HCT116 (cell line): ENCODE measurements at regions of chr14 and their contacts with region 1.

Region 1: GRCh38 chr14:87542288-87542687 is 450.7 kb downstream of the GALC start:
- DNase-seq: no peak
- ATAC-seq: no peak
- H3K4me3 ChIP-seq: no peak overlapping the region
- H3K27ac ChIP-seq: no peak overlapping the region
- H3K4me1 ChIP-seq: no peaks in the 10 kb centered on the region
- H3K27me3 ChIP-seq: no peaks in the 10 kb centered on the region
- CTCF ChIP-seq: no peak
- POLR2A ChIP-seq: no peak
- RAD21 ChIP-seq: no peak

Region 2: GRCh38 chr14:87529081-87529480 is 13.2 kb before region 1 on chr14:
- CTCF ChIA-PET with region 1: no interaction called
- POLR2A ChIA-PET with region 1: no interaction called
- RAD21 ChIA-PET with region 1: no interaction called
- intact Hi-C with region 1: loop called (anchors 1 kb)
- DNase-seq: no peak
- ATAC-seq: no peak
- H3K4me3 ChIP-seq: no peak overlapping the region
- H3K27ac ChIP-seq: no peak overlapping the region
- H3K4me1 ChIP-seq: no peaks in the 10 kb centered on the region
- H3K27me3 ChIP-seq: no peaks in the 10 kb centered on the region
- CTCF ChIP-seq: no peak
- POLR2A ChIP-seq: no peak
- RAD21 ChIP-seq: no peak